ENCODE measurements at regions of chr4 and their contacts with region 1.

Region 1: DNA sequence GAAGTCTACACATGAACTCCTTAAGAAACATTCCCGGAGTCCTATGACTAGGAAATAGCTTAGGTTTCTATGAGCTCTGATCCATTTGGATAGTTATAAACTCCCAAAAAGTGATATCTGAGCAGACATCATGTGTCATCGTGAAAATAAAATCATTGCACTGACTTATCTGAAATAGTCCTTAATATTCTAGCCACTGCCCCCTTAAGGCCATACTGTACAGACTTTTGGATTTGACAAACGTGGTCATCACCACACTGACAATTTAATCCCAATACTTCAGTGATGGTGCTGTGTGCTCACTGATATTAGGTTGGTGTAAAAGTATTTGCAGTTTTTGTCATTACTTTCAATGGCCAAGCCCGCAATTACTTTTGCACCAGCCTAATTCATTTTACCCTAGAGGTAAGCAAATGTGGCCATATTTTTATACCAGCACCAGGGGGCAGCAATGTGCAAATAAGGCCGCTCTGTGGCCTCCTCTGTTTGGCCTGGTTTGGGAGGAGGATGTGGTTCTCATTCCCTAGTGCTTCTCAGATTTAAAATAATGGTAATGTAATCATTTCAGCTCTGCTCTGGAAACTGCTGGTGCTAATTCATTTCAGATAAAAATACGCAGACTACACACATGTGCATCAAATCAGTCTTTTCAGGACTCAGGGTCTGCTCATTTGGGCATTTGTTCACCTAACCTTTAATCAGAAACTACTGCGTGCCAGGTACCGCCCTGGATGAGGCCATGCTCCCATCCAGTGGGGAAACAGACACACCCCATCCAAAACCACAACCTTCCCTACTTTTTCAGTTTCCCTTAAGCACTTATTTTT is 196.4 kb upstream of the C1QTNF7 start:
- DNase-seq: peak; percentile 89
- H3K4me3 Mint-ChIP-seq: no peak overlapping the region
- H3K27ac Mint-ChIP-seq: no peak overlapping the region
- H3K4me1 Mint-ChIP-seq: peaks cover 27% of the 10 kb centered on the region
- H3K27me3 Mint-ChIP-seq: no peaks in the 10 kb centered on the region

Region 2: GRCh38 chr4:15164571-15164970 is 66.9 kb before region 1 on chr4:
- CTCF ChIA-PET with region 1: no interaction called
- intact Hi-C with region 1: no loop called
- DNase-seq: no peak
- H3K4me3 Mint-ChIP-seq: no peak overlapping the region
- H3K27ac Mint-ChIP-seq: no peak overlapping the region
- H3K4me1 Mint-ChIP-seq: no peaks in the 10 kb centered on the region
- H3K27me3 Mint-ChIP-seq: peaks cover 10% of the 10 kb centered on the region

Region 3: GRCh38 chr4:15182600-15183220 is 48.8 kb before region 1 on chr4:
- CTCF ChIA-PET with region 1: interaction called, 3 read pairs
- intact Hi-C with region 1: loop called (anchors 1 kb)
- DNase-seq: peak; percentile 56
- H3K4me3 Mint-ChIP-seq: no peak overlapping the region
- H3K27ac Mint-ChIP-seq: no peak overlapping the region
- H3K4me1 Mint-ChIP-seq: peaks cover 25% of the 10 kb centered on the region
- H3K27me3 Mint-ChIP-seq: no peaks in the 10 kb centered on the region

Region 4: DNA sequence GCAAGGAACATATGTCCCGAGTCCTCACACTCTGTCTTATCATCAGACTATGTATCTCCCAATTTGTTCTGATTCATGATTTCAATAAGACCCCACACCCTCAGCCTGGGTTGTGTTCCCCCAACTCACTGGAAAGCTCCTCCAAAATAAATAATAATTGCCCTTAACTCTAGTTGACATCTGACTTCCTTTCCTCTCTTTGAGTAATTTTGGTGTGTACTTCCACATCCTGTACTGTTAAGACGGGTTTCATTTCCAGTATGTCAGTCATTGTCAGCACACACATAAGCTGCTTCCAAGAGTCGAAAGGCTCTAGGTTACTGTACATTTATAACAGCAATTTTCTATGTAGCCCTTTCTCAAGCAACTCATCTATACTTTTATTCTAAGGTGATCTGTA is 144.2 kb after region 1 on chr4:
- CTCF ChIA-PET with region 1: interaction called, 4 read pairs
- intact Hi-C with region 1: loop called (anchors 5 kb)
- DNase-seq: no peak
- H3K4me3 Mint-ChIP-seq: no peak overlapping the region
- H3K27ac Mint-ChIP-seq: peak overlapping the region; percentile 12
- H3K4me1 Mint-ChIP-seq: peaks cover 26% of the 10 kb centered on the region
- H3K27me3 Mint-ChIP-seq: no peaks in the 10 kb centered on the region

Region 5: GRCh38 chr4:15423285-15423711 is 191.8 kb after region 1 on chr4:
- CTCF ChIA-PET with region 1: interaction called, 3 read pairs
- intact Hi-C with region 1: loop called (anchors 1 kb)
- DNase-seq: peak; percentile 59
- H3K4me3 Mint-ChIP-seq: no peak overlapping the region
- H3K27ac Mint-ChIP-seq: peak overlapping the region; percentile 20
- H3K4me1 Mint-ChIP-seq: peaks cover 33% of the 10 kb centered on the region
- H3K27me3 Mint-ChIP-seq: no peaks in the 10 kb centered on the region

Region 6: DNA sequence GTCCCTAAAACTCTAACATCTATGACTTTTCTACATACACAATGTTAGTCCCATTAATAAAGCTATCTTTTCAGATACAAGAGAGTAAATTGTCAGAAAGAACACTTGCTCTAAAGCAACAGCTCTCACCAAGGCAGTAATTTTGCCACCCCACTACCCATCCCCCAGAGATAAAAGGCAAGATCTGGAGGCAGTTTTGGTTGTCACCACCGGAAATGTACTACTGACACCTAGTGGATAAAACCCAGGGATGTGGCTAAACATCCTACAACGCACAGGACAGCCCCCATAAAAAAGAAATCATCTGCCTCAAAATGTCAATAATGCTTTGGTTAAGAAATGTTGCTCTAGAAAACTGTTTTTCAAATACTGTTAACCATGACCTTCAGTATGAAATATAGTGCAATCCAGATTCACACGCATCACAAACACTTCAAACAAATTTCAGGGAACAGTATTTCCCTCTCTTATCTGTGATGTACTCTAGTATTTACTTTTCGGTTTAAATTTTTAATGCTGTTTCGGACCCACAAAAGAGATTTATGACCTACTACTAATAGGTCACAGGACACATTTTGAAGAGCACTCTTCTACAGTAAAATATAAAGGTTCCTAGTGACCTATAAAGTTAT is 418.6 kb after region 1 on chr4:
- CTCF ChIA-PET with region 1: interaction called, 3 read pairs
- intact Hi-C with region 1: loop called (anchors 1 kb)
- DNase-seq: peak; percentile 77
- H3K4me3 Mint-ChIP-seq: peak overlapping the region; percentile 50
- H3K27ac Mint-ChIP-seq: peak overlapping the region; percentile 77
- H3K4me1 Mint-ChIP-seq: peaks cover 64% of the 10 kb centered on the region
- H3K27me3 Mint-ChIP-seq: no peaks in the 10 kb centered on the region

Region 7: DNA sequence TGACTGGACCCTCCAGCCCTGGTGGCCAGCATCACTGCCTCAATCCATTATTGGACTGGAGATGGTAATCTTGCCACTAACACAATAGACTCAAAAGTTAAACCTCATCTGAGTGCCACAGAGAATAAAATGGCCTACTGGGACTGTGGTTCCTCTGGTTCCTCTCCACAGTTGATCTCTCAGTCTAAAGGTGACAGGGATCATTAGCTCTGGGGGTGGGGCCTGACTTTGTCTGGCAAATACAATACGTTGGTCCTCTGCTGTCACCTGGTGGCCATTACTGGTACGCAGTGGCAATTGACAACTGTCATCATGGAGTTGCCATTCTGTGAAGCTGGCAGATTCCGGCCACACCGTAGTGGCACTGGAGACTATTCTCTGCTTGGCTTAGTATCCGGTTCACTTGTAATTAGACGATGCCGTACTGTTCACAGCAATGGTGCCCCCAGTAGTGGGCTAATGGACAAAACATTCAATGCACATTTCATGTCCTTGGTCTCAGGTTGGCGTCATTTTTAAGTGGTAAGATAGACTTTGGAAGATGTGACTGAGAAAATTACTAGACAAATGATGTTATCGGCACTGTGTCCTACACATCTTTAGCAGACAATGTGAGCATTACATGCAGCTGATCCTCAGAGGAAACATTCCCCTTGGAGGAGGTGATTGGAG is 724.8 kb after region 1 on chr4:
- CTCF ChIA-PET with region 1: no interaction called
- intact Hi-C with region 1: loop called (anchors 2 kb)
- DNase-seq: peak; percentile 93
- H3K4me3 Mint-ChIP-seq: no peak overlapping the region
- H3K27ac Mint-ChIP-seq: no peak overlapping the region
- H3K4me1 Mint-ChIP-seq: no peaks in the 10 kb centered on the region
- H3K27me3 Mint-ChIP-seq: no peaks in the 10 kb centered on the region